SK-N-SH (cell line): ENCODE measurements at regions of chr9 and their contacts with region 1.

Region 1: DNA sequence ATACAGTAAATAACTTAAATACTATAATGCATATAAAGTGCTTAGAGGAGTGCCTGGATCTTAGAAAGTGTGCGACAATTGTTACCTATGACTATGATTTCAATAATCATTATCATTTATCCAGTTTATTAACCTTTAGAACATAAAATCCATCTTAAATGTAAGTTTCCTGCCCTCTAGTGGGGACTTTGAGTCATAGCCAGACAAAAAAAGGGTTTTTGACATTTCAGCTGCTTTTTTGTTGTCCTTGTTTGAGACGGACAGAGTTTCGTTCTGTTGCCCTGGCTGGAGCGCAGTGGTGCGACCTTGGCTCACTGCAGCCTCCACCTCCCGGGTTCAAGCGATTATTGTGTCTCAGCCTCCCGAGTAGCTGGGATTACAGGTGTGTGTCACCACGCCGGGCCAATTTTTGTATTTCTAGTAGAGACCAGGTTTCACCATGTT is 9.7 kb upstream of the C9orf152 start:
- DNase-seq: peak; percentile 35
- H3K4me3 ChIP-seq: no peak overlapping the region
- H3K27ac ChIP-seq: no peak overlapping the region
- H3K4me1 ChIP-seq: no peaks in the 10 kb centered on the region
- H3K27me3 ChIP-seq: 0 out of 2 replicates have a peak, but pooled peaks cover 7% of the 10 kb centered on the region
- CTCF ChIP-seq: peak; percentile 80
- EP300 ChIP-seq: no peak
- RAD21 ChIP-seq: peak; percentile 69

Region 2: GRCh38 chr9:110183208-110184145 is 34.2 kb before region 1 on chr9:
- CTCF ChIA-PET with region 1: interaction called, 59 read pairs
- POLR2A ChIA-PET with region 1: interaction called, 3 read pairs
- DNase-seq: peak; percentile 67
- H3K4me3 ChIP-seq: peak overlapping the region in 1 of 2 experiments; percentile 4; a peak in 1 of 4 replicates
- H3K27ac ChIP-seq: no peak overlapping the region
- H3K4me1 ChIP-seq: no peaks in the 10 kb centered on the region
- H3K27me3 ChIP-seq: no peaks in the 10 kb centered on the region
- CTCF ChIP-seq: peak; percentile 81
- EP300 ChIP-seq: no peak
- RAD21 ChIP-seq: peak; percentile 88

Region 3: DNA sequence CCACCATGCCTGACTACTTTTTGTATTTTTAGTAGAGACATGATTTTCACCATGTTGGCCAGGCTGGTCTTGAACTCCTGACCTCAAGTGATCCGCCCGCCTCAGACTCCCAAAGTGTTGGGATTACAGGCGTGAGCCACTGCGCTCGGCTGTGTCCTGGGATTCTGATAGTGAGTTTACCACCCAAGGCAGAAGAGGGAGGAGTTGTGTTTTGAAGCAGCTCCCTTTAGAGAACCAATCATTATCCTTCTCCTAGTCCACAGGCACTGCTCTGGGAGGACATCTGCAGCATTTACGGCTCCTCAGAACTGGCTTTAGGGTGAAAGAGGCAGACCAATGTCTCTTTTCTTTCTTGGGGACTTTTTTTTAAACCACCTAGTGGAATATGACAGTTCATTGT is 15.4 kb before region 1 on chr9:
- CTCF ChIA-PET with region 1: interaction called, 10 read pairs
- POLR2A ChIA-PET with region 1: no interaction called
- DNase-seq: no peak
- H3K4me3 ChIP-seq: no peak overlapping the region
- H3K27ac ChIP-seq: no peak overlapping the region
- H3K4me1 ChIP-seq: no peaks in the 10 kb centered on the region
- H3K27me3 ChIP-seq: no peaks in the 10 kb centered on the region; the same call in 1 of the 2 replicates
- CTCF ChIP-seq: no peak
- EP300 ChIP-seq: no peak
- RAD21 ChIP-seq: no peak

Region 4: DNA sequence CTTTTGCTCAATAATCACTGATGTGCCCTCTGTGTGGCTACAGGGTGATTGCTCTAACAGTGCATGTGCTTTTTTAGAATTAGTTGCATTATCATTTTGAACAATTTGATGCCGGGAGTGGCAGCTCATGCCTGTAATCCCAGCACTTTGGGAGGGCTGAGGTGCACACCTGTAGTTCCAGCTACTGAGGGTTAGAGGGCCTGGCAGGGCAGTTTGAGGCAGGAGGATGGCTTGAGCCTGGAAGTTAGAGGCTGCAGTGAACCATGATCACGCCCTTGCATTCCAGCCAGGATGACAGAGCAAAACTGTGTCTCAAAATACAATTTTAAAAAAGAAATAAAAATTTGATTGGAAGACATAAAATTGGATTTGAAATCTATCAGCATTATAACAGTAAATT is 11.3 kb after region 1 on chr9:
- CTCF ChIA-PET with region 1: interaction called, 13 read pairs
- POLR2A ChIA-PET with region 1: no interaction called
- DNase-seq: no peak
- H3K4me3 ChIP-seq: no peak overlapping the region
- H3K27ac ChIP-seq: no peak overlapping the region
- H3K4me1 ChIP-seq: no peaks in the 10 kb centered on the region
- H3K27me3 ChIP-seq: no peaks in the 10 kb centered on the region; the same call in 1 of the 2 replicates
- CTCF ChIP-seq: no peak
- EP300 ChIP-seq: no peak
- RAD21 ChIP-seq: no peak